ENCODE measurements at regions of chr21 and their contacts with region 1.

Region 1: DNA sequence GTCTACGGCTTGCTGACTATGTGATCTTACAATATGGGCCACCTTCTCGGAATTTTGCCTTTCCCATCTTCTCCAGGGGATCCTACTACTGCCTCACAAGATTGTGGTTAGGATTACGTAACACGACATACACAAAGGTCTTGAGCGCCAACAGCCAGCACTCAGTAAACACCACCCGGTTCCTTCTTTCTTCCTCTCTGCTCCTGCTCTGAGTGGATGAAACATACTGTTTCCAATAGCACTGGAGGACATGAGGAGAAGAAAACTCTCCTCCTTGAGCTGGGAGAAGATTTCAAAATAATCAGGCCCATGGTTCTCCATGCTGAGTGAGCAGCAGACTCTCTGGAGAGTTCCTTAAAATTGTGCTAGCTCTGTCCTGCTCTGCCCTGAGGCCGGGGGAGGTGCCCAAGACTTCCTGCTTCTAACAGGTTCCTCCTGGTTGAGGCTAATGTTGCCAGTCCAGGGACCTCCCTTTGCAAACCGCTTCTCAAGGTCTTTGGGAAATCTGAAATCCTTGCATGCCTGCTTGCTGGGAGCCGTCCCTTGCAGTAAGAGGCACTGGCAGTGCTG is 29.4 kb upstream of the MX1 start:
- DNase-seq: peak; percentile 62 to 71 (median 68)
- H3K4me3 ChIP-seq: peak overlapping the region in 1 of 3 experiments; percentile 67
- H3K4me3 Mint-ChIP-seq: peak overlapping the region; percentile 31 to 73
- H3K27ac ChIP-seq: peak overlapping the region; percentile 64 to 84
- H3K27ac Mint-ChIP-seq: peak overlapping the region; percentile 70 to 92 (median 89)
- H3K4me1 ChIP-seq: peaks cover 36 to 44% of the 10 kb centered on the region in 2 donors
- H3K4me1 Mint-ChIP-seq: peaks cover 50% of the 10 kb centered on the region
- H3K27me3 ChIP-seq: no peaks in the 10 kb centered on the region
- H3K27me3 Mint-ChIP-seq: peaks cover 0 to 3% (median 0%) of the 10 kb centered on the region in 3 donors
- CTCF ChIP-seq: no peak

Region 2: DNA sequence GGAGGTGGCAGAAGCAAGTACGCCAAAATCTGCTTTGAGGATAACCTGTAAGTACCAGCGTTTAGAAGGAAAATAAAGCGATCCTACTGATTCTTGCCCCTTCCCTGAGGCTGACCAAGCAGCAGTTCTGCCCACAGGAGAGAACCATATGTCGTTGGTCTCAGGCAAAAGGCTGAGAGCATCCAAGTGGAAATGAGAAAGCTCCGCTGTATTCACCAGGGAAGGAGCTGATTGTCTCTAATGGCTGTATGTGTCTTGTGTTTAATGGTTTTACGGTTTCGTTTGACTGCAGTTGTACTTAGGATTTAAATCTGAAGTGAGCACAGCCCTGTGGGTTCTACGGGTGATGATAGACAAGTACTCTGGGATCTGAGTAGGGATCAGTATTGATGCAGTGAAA is 58.1 kb before region 1 on chr21:
- intact Hi-C with region 1: loop called in 1 of 2 experiments (anchors 5 kb)
- DNase-seq: no peak
- H3K4me3 ChIP-seq: no peak overlapping the region
- H3K4me3 Mint-ChIP-seq: no peak overlapping the region
- H3K27ac ChIP-seq: no peak overlapping the region
- H3K27ac Mint-ChIP-seq: no peak overlapping the region
- H3K4me1 ChIP-seq: no peaks in the 10 kb centered on the region
- H3K4me1 Mint-ChIP-seq: no peaks in the 10 kb centered on the region
- H3K27me3 ChIP-seq: no peaks in the 10 kb centered on the region
- H3K27me3 Mint-ChIP-seq: peaks cover 3 to 6% (median 5%) of the 10 kb centered on the region in 3 donors
- CTCF ChIP-seq: no peak

Region 3: GRCh38 chr21:41361786-41362604 is 34.6 kb before region 1 on chr21 and contains the start of gene MX2:
- intact Hi-C with region 1: loop called in 1 of 2 experiments (anchors 5 kb)
- DNase-seq: peak; percentile 92 to 96 (median 94)
- H3K4me3 ChIP-seq: peak within 1 kb of the TSS; percentile 56 to 83 (median 78)
- H3K4me3 Mint-ChIP-seq: peak within 1 kb of the TSS; percentile 97 to 100
- H3K27ac ChIP-seq: peak within 1 kb of the TSS; percentile 99 to 100
- H3K27ac Mint-ChIP-seq: peak within 1 kb of the TSS; percentile 100
- H3K4me1 ChIP-seq: peaks cover 48 to 56% of the 10 kb centered on the region in 2 donors
- H3K4me1 Mint-ChIP-seq: peaks cover 60% of the 10 kb centered on the region
- H3K27me3 ChIP-seq: no peaks in the 10 kb centered on the region
- H3K27me3 Mint-ChIP-seq: peaks cover 0 to 2% (median 1%) of the 10 kb centered on the region in 3 donors
- CTCF ChIP-seq: no peak
- polyA plus RNA-seq, gene MX2: 43.1 to 79.4 (median 50.3) TPM

Region 4: DNA sequence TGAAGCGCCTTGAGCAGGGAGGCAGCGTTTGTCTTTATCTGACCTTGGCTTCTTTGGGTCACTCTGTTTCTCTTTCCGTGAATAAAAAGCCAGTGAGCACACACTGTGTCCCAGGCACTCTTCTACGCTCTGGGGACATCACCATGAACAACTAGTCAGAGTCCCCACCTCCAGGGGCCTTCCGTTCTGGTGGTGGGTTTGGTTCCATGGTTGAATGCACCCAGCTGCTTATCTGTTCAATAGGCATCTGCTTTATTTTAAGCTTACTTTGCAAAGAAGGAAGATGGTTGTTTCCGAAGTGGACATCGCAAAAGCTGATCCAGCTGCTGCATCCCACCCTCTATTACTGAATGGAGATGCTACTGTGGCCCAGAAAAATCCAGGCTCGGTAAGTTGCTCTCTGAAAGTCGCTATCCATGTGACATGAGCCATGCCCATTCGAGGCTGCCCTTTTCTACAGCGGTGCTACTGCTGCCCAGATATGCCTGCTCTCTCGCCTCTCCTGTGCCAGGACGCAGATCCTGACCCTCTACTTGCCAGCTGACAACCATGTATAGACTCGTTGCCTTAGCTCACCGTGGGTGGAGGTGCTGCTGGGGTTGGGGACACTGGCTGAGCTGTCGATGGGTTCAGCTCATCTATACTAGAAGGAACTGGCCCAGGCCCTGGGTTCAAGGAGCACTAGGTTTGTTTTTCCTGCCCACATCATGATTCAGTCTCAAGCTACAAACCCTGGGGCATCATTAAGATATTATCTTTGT is 35.4 kb after region 1 on chr21:
- intact Hi-C with region 1: loop called in 1 of 2 experiments (anchors 5 kb)
- DNase-seq: no peak
- H3K4me3 ChIP-seq: no peak overlapping the region
- H3K4me3 Mint-ChIP-seq: no peak overlapping the region
- H3K27ac ChIP-seq: no peak overlapping the region
- H3K27ac Mint-ChIP-seq: peak overlapping the region in 2 of 7 donors; percentile 41 to 76
- H3K4me1 ChIP-seq: peaks cover 4 to 5% of the 10 kb centered on the region in 2 donors
- H3K4me1 Mint-ChIP-seq: peaks cover 23% of the 10 kb centered on the region
- H3K27me3 ChIP-seq: peaks cover 0 to 3% of the 10 kb centered on the region in 2 donors
- H3K27me3 Mint-ChIP-seq: peaks cover 2 to 14% (median 6%) of the 10 kb centered on the region in 3 donors
- CTCF ChIP-seq: no peak

Region 5: DNA sequence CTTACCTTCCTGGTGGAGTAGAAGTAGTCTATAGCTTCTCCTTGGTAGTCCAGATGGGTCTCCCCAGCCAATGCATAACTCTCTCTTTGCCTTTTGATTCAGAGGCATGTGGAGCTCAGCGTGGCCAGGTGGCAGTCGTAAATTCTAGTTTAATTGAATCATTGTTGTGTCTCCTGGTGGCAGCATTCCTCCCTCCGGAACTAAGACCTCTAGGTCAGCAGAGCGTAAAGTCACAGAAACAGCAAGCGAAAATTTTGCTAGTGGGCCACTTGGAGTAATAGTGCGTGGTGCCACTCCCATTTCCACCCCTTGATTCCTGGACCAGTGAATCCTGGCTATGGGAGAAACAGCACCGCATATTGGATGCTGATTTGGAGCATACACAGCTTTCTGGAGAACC is 115.3 kb after region 1 on chr21:
- intact Hi-C with region 1: no loop called
- DNase-seq: no peak
- H3K4me3 ChIP-seq: no peak overlapping the region
- H3K4me3 Mint-ChIP-seq: no peak overlapping the region
- H3K27ac ChIP-seq: no peak overlapping the region
- H3K27ac Mint-ChIP-seq: no peak overlapping the region
- H3K4me1 ChIP-seq: no peaks in the 10 kb centered on the region
- H3K4me1 Mint-ChIP-seq: no peaks in the 10 kb centered on the region
- H3K27me3 ChIP-seq: peaks cover 19 to 33% of the 10 kb centered on the region in 2 donors
- H3K27me3 Mint-ChIP-seq: peaks cover 21 to 42% (median 32%) of the 10 kb centered on the region in 3 donors
- CTCF ChIP-seq: no peak